ENCODE measurements at regions of chr2 and their contacts with region 1.

Region 1: DNA sequence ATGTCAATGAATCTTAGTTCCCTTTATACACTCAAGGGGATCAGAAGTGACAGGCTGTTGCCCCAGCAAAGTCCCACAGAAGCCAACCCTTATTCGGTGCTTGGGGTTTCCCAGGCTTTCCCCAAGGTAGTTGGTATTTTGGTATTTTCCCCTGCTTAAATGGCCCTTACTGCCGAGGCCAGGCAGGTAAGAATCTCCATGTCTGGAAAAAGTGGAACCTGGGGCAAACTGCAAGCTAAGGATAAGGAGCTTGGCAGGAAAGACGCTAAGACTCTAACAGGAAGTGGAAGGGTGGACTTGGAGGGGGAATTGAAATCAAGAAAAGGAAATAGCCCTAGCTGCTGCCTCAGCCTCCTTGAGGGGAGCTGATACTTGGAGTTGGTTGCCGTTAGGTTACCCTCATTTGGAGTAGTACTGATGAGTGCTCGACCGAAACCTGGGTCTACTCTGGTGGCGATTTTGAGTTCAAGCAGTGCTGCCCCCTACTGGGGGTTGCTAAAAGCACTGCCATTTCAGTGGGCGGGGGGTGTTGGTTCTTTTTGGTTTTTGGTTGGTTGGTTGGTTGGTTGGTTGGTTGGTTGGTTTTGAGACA is 3.3 kb upstream of the GPBAR1 start:
- DNase-seq: no peak
- H3K4me3 ChIP-seq: no peak overlapping the region
- CTCF ChIP-seq: peak; percentile 52

Region 2: DNA sequence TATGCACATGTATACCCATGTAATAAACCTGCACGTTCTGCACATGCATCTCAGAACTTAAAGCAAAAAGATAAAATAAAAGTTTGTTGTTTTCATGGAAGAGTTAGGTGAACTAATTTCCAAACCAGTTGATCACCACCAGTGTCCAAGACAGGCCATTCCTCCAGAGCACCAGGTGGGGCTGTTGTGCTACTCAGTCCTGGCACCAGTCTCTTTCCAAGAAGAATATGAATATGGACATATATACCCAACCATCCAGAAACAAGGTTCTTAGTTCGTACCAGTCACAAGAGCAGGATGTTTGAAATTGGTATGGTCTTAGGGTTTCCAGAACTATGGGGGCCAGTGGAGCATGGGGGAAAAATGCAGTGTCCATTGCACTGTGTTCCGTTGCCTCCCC is 1380.4 kb before region 1 on chr2:
- CTCF ChIA-PET with region 1: no interaction called
- POLR2A ChIA-PET with region 1: no interaction called
- DNase-seq: no peak
- H3K4me3 ChIP-seq: no peak overlapping the region
- CTCF ChIP-seq: peak; percentile 8

Region 3: DNA sequence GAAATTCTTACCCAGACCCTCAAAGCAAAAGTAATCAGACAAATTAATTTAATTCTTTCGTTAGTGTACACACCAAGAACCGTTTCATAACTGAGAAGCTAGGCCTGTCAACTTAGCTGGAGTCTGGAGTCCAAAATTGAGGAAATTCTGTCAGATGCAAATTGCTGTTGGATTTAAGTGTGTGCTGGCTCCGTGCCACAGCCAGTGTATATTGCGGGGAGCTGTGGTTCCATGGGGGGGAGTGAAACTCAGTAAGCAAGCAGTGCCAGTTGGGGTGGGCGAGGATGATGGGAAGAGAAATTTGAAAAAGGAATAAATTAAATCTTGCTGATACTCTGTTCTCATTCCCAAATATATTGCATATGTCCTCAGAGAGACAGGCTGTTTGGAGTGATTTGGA is 36.5 kb before region 1 on chr2:
- CTCF ChIA-PET with region 1: interaction called, 13 read pairs
- POLR2A ChIA-PET with region 1: interaction called, 3 read pairs
- DNase-seq: no peak
- H3K4me3 ChIP-seq: no peak overlapping the region
- CTCF ChIP-seq: no peak

Region 4: DNA sequence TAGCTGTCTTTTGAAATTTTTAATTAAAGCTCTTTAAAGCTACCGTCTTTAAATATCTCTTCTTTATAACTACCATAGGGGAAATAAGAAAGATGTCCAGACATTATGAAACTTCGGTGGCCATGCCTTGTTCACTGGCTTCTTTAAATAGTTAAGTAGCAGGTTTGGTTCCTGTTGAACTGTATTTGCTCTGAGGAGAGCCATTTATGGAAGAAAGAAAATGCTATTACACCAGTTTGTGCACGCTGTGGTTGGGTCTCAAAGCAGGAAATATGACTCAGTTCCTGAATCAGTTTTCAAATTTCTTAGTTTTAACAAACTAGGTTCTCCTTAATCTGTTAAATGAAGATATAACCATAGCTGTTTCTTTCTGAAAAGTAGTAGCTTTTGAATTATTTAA is 28.2 kb before region 1 on chr2:
- CTCF ChIA-PET with region 1: interaction called, 12 read pairs
- POLR2A ChIA-PET with region 1: interaction called, 3 read pairs
- DNase-seq: peak; percentile 74
- H3K4me3 ChIP-seq: no peak overlapping the region
- CTCF ChIP-seq: no peak

Region 5: DNA sequence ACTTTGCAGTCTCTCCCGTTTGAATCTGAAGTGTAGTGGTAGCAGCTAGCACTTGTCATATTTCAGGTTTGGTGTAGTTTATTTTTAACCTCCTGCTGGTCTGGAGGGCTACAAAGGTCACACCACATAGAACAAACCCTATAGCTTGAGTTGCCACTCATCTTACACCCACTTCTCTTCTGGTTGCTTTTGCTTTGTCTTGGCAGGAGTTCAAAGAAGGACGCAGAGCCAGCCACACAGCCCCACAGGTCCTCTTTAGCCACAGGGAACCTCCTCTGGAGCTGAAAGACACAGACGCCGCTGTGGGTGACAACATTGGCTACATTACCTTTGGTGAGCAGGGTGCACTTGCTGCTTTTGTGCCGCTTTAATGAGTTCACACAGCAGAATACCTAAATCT is 12.3 kb before region 1 on chr2:
- CTCF ChIA-PET with region 1: interaction called, 75 read pairs
- POLR2A ChIA-PET with region 1: interaction called, 4 read pairs
- DNase-seq: no peak
- H3K4me3 ChIP-seq: no peak overlapping the region
- CTCF ChIP-seq: no peak

Region 6: GRCh38 chr2:218298314-218298875 is 40.9 kb after region 1 on chr2:
- CTCF ChIA-PET with region 1: no interaction called
- POLR2A ChIA-PET with region 1: no interaction called
- DNase-seq: no peak
- H3K4me3 ChIP-seq: no peak overlapping the region
- CTCF ChIP-seq: no peak

Region 7: DNA sequence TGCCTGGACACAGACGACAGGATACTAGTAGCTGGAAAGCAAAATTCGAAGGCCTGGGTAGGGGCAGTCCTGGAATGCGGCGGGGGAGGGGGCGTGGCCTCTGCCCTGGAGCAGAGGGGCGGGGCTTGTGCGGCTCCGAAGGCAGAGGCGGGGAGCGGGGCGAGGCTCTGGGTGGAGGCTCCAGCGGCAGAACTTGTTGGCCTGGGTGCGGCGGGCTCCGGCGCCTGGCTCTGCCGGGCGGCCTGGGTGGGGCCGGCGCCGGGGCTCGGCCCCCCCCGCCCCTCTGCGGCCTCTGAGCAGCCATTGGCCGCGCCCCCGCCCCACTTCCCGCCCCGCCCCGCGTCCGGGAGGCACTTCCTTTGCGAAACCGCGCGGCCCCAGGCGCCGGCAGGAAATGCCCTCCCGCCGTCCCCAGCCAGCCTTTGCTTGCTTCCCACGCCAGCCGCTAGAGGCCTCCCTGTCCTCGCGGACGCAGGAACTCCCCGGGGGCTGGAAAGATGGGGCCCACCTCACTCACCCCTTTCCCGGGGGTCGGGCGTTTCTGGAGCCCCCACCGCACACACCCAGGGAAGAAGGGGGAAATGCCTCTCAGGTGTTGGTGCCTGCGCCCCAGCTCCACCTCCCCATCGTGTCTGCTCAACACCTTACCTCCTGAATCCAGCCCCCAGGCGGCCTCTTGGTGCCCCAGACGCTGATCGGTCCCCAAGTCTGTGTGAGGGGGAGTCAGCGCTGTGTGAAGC is 148.9 kb after region 1 on chr2:
- CTCF ChIA-PET with region 1: no interaction called
- POLR2A ChIA-PET with region 1: no interaction called
- DNase-seq: peak; percentile 57
- H3K4me3 ChIP-seq: peak overlapping the region; percentile 54
- CTCF ChIP-seq: peak; percentile 95

Region 8: GRCh38 chr2:219119422-219120043 is 862.0 kb after region 1 on chr2:
- CTCF ChIA-PET with region 1: no interaction called
- POLR2A ChIA-PET with region 1: no interaction called
- DNase-seq: no peak
- H3K4me3 ChIP-seq: no peak overlapping the region
- CTCF ChIP-seq: peak; percentile 69